ENCODE measurements at regions of chr2 and their contacts with region 1.

Region 1: DNA sequence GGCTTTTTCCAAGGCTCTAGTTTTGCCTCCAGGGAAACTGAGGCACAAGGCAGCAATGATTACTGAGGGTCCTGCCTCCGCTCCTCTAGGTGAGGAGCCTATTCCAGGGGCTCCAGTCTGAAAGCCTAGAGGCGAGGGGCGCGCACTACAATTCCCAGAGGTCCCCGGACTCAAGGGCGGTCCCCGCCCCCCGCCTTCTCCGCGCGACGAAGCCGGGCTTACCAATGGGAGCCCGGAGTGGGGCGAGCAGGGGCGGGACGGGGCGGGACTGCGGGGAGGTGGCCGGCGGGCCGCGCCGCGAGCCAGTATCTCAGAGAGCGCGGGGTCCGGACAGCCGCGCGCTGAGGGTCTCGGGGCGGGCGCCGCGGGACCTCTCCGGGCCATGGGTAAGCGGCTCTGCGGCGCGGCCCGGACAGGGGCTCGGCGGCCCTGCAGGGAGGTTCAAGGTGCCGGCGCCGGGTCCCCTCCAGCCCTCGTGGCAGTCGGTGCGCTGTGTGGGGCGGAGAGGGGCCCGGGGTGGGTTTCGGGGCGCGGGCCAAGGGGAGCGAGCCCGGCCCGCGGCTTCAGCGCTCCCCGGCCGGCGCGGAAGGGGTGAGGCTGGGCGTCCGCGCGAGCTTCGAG is at the start of gene ARID5A:
- DNase-seq: peak; percentile 88 to 95 (median 91)
- ATAC-seq: peak; percentile 48
- H3K4me3 ChIP-seq: peak within 1 kb of the TSS; percentile 90
- H3K4me3 Mint-ChIP-seq: peak within 1 kb of the TSS; percentile 99
- H3K27ac ChIP-seq: peak within 1 kb of the TSS; percentile 88 to 99
- H3K27ac Mint-ChIP-seq: peak within 1 kb of the TSS; percentile 99
- H3K4me1 ChIP-seq: peaks cover 76% of the 10 kb centered on the region
- H3K4me1 Mint-ChIP-seq: peaks cover 60% of the 10 kb centered on the region
- H3K27me3 ChIP-seq: no peaks in the 10 kb centered on the region
- H3K27me3 Mint-ChIP-seq: no peaks in the 10 kb centered on the region
- CTCF ChIP-seq: peak; percentile 53
- total RNA-seq, gene ARID5A: 326 to 342 TPM

Region 2: DNA sequence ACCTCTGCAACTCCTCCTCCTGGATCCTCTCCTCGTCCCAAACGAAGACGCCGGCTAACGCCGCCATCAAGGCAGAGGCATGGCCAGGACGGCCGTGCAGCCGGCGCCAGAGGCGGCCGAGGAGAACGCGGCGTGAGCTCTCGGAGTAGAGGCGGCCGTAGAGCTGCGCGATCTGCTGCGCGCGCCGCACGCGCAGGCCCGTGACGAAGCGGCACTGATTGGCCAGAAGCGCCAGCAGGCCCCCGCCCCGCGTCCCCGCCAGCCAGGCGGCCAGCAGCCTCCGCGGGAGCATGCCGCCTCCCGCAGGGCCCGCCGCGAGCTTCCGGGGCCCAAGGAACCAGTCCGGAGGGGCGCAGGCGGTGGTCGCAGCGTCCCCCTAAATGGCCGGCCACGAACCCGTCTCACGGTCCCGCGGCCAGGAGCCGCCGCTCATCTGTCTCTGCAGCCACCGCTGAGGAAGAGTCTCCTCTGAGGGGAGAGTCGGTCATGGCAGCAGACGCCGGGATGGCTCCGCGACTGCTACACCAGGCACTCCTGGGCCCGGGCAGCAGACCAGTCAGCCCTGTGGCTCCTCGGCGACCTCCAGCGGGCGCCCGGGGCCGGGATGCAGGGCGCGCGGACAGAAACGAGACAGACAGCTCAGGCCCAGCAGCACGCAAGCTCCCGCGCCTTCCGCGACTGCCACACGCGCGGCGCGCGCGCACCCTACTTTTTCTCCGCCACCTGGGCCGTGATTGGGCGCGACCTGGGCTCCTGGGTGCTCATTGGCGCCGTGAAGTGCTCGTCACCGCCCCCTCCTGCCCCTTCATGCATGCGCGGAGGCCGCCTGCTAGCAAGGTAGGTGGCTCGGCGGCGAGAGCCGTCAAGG is 328.2 kb before region 1 on chr2 and contains the start of gene STARD7:
- CTCF ChIA-PET with region 1: no interaction called
- POLR2A ChIA-PET with region 1: interaction called, 19 read pairs
- intact Hi-C with region 1: loop called in 1 of 2 experiments (anchors 5 kb)
- DNase-seq: peak; percentile 94 to 98 (median 96)
- ATAC-seq: peak; percentile 87
- H3K4me3 ChIP-seq: peak within 1 kb of the TSS; percentile 85
- H3K4me3 Mint-ChIP-seq: peak within 1 kb of the TSS; percentile 96
- H3K27ac ChIP-seq: peak within 1 kb of the TSS; percentile 57 to 87
- H3K27ac Mint-ChIP-seq: peak within 1 kb of the TSS; percentile 89
- H3K4me1 ChIP-seq: peaks cover 49% of the 10 kb centered on the region
- H3K4me1 Mint-ChIP-seq: peaks cover 57% of the 10 kb centered on the region
- H3K27me3 ChIP-seq: no peaks in the 10 kb centered on the region
- H3K27me3 Mint-ChIP-seq: no peaks in the 10 kb centered on the region
- CTCF ChIP-seq: peak; percentile 17
- total RNA-seq, gene STARD7: 57.4 to 58.6 TPM

Region 3: GRCh38 chr2:96320728-96321622 is 215.6 kb before region 1 on chr2:
- CTCF ChIA-PET with region 1: interaction called, 4 read pairs
- POLR2A ChIA-PET with region 1: interaction called, 12 read pairs
- intact Hi-C with region 1: no loop called
- DNase-seq: peak in 6 of 14 experiments; percentile 1 to 50 (median 24)
- ATAC-seq: no peak
- H3K4me3 ChIP-seq: peak overlapping the region; percentile 92
- H3K4me3 Mint-ChIP-seq: peak overlapping the region; percentile 84
- H3K27ac ChIP-seq: peak overlapping the region in 1 of 2 donors; percentile 63
- H3K27ac Mint-ChIP-seq: peak overlapping the region; percentile 16
- H3K4me1 ChIP-seq: peaks cover 64% of the 10 kb centered on the region
- H3K4me1 Mint-ChIP-seq: peaks cover 46% of the 10 kb centered on the region
- H3K27me3 ChIP-seq: no peaks in the 10 kb centered on the region
- H3K27me3 Mint-ChIP-seq: peaks cover 3% of the 10 kb centered on the region
- CTCF ChIP-seq: no peak

Region 4: DNA sequence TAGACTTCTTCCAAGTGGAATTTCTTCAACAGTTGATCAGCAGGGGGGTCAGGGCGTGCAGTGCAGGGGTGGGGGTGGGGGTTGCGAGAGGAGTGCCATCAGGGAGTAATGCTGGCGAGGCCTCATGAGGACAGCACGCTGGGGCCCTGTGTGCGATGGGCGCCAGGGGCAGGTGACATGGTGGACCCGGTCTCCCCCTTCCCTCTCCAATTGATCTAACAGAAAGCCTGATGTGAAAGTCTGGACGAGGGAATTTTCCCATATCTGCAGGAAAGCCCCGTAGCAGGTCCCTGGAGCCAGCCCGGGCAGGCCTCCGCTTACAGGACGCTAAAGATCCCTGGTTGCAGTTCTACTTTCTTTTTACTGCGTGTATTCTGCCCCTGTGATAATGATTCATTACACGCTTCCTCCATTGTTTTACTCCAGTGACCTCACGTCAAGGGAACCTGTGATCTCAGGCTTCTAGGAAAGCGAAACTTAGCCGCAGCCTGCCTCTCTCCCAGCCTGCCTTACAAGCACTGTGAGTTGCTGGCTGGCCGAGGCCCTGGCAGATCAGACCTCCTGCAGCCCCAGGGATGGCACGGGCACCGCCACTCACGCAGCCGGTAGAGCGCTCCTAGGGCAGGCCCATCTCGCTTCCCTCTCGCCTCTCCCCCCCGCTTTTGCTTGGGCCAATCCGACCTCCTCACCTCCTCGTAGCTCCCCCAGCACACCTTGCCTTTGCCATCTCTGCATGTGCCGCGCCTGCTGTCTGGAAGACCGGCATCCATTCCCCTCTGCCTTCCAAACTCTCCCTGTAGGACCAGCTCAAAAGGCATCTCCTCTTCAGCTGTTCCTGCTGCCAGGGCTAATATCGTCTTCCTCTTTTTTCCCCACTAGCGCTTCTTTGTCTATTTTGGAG is 50.6 kb before region 1 on chr2:
- CTCF ChIA-PET with region 1: no interaction called
- POLR2A ChIA-PET with region 1: interaction called, 7 read pairs
- intact Hi-C with region 1: loop called in 1 of 2 experiments (anchors 5 kb)
- DNase-seq: peak; percentile 57 to 91 (median 77)
- ATAC-seq: peak; percentile 95
- H3K4me3 ChIP-seq: peak overlapping the region; percentile 52
- H3K4me3 Mint-ChIP-seq: peak overlapping the region; percentile 88
- H3K27ac ChIP-seq: peak overlapping the region; percentile 58
- H3K27ac Mint-ChIP-seq: peak overlapping the region; percentile 91
- H3K4me1 ChIP-seq: peaks cover 14% of the 10 kb centered on the region
- H3K4me1 Mint-ChIP-seq: peaks cover 23% of the 10 kb centered on the region
- H3K27me3 ChIP-seq: no peaks in the 10 kb centered on the region
- H3K27me3 Mint-ChIP-seq: no peaks in the 10 kb centered on the region
- CTCF ChIP-seq: no peak

Region 5: GRCh38 chr2:96554293-96555145 is 18.0 kb after region 1 on chr2:
- CTCF ChIA-PET with region 1: interaction called, 54 read pairs
- POLR2A ChIA-PET with region 1: interaction called, 145 read pairs
- intact Hi-C with region 1: loop called (anchors 2 kb)
- DNase-seq: peak; percentile 57 to 88 (median 67)
- ATAC-seq: peak; percentile 56
- H3K4me3 ChIP-seq: peak overlapping the region; percentile 7
- H3K4me3 Mint-ChIP-seq: no peak overlapping the region
- H3K27ac ChIP-seq: no peak overlapping the region
- H3K27ac Mint-ChIP-seq: peak overlapping the region; percentile 79
- H3K4me1 ChIP-seq: peaks cover 20% of the 10 kb centered on the region
- H3K4me1 Mint-ChIP-seq: peaks cover 29% of the 10 kb centered on the region
- H3K27me3 ChIP-seq: no peaks in the 10 kb centered on the region
- H3K27me3 Mint-ChIP-seq: no peaks in the 10 kb centered on the region
- CTCF ChIP-seq: peak; percentile 98

Region 6: DNA sequence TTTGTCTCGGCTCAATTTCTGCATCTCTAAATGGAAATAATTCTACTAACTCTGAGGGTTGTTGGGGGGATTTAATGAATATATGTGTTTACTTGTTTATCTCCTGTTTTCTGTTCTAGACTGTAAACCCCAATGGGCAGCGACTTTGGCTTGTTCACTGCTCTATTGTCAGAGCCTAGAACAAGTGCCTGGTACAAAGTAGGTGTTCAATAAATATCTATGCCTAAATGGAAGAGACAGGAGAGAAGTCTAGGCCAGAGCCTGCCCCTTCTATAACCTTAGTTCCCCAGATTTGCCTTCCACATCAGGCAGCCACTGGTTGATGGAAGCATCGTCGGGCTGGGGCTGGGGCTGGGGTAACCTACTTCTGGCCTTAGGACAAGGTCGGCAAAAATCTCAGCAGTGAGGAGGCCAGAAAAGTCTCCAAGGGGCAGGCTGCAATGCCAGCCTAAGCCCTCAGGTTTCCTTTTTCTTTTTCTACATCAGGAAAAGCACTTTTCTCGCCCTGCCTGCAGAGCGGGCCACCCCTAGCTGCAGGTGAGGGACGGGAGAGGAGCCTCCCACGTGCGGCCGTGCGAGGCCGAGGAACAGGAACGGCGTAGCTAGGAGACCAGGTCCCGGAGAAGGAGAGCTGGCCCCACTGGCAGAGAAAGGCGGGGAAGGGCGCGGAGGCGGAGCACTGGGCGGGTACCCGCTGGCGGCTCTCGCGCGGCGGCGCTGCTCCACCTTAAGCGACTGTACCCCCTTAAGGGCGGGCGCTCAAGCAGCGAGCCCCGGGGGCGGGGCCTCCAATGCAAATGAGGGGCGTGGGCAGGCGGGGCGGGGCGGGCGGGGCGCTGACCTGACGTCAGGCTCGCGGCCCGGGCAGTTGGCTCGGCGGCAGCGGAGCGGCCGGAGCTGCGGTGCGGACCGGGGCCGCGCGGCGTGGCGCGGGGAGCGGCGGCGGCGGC is 223.8 kb after region 1 on chr2 and contains the start of gene CNNM4:
- CTCF ChIA-PET with region 1: interaction called, 4 read pairs
- POLR2A ChIA-PET with region 1: interaction called, 7 read pairs
- intact Hi-C with region 1: loop called in 1 of 2 experiments (anchors 2 kb)
- DNase-seq: peak; percentile 81 to 95 (median 90)
- ATAC-seq: peak; percentile 95
- H3K4me3 ChIP-seq: peak within 1 kb of the TSS; percentile 72
- H3K4me3 Mint-ChIP-seq: peak within 1 kb of the TSS; percentile 94
- H3K27ac ChIP-seq: peak within 1 kb of the TSS; percentile 62 to 73
- H3K27ac Mint-ChIP-seq: peak within 1 kb of the TSS; percentile 93
- H3K4me1 ChIP-seq: peaks cover 59% of the 10 kb centered on the region
- H3K4me1 Mint-ChIP-seq: peaks cover 52% of the 10 kb centered on the region
- H3K27me3 ChIP-seq: no peaks in the 10 kb centered on the region
- H3K27me3 Mint-ChIP-seq: no peaks in the 10 kb centered on the region
- CTCF ChIP-seq: no peak
- total RNA-seq, gene CNNM4: 7.0 to 7.1 TPM

Region 7: DNA sequence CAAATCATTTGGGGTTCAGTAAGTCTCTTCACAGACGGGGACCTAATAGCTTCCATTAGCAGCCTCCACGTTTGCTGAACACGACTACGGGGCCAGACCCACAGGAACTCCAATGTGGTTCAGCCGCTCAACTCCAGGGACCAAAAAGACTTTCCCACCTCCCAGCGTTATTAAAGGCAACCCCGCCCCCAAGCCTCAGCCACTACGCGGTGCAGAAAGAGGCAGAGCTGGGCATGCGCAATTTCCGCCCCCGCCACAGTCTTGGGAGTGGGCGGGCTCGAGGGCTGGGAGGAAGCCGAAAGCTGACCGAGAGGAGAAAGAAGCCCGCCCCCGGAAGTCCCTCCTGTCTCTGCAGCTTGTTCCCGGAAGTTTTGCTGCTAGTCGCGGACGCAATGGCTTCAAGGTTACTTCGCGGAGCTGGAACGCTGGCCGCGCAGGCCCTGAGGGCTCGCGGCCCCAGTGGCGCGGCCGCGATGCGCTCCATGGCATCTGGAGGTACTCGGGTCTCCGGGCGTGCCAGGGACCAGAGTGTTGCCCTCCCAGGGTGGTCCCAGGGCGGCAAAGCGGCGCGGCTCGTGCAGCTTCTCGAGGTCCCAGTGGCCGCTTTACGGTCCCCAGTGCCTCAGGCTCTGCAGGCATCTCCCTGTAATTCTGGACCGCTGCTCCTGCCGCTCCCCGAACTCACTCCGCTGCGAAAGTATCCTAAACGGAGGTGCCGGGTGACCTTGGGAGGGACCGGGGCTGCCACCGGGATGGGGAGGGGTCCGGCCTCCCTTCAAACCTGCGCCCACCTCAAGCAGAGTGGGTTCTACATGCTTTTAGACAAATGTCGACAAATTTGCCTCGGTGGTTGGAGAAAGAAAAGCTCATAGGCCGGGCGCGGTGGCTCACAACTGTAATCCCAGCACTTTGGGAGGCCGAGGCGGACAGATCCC is 1109.4 kb after region 1 on chr2 and contains the start of gene COX5B:
- CTCF ChIA-PET with region 1: no interaction called
- POLR2A ChIA-PET with region 1: no interaction called
- intact Hi-C with region 1: loop called in 1 of 2 experiments (anchors 10 kb)
- DNase-seq: peak; percentile 96 to 99 (median 98)
- ATAC-seq: peak; percentile 96
- H3K4me3 ChIP-seq: peak within 1 kb of the TSS; percentile 97
- H3K4me3 Mint-ChIP-seq: peak within 1 kb of the TSS; percentile 97
- H3K27ac ChIP-seq: peak within 1 kb of the TSS; percentile 84 to 89
- H3K27ac Mint-ChIP-seq: peak within 1 kb of the TSS; percentile 93
- H3K4me1 ChIP-seq: peaks cover 18% of the 10 kb centered on the region
- H3K4me1 Mint-ChIP-seq: peaks cover 31% of the 10 kb centered on the region
- H3K27me3 ChIP-seq: no peaks in the 10 kb centered on the region
- H3K27me3 Mint-ChIP-seq: no peaks in the 10 kb centered on the region
- CTCF ChIP-seq: no peak
- total RNA-seq, gene COX5B: 112 to 121 TPM

Region 8: GRCh38 chr2:97718051-97718882 is 1181.7 kb after region 1 on chr2:
- CTCF ChIA-PET with region 1: no interaction called
- POLR2A ChIA-PET with region 1: no interaction called
- intact Hi-C with region 1: no loop called
- DNase-seq: peak; percentile 57 to 89 (median 74)
- ATAC-seq: peak; percentile 88
- H3K4me3 ChIP-seq: peak overlapping the region; percentile 76
- H3K4me3 Mint-ChIP-seq: peak overlapping the region; percentile 89
- H3K27ac ChIP-seq: peak overlapping the region; percentile 75 to 88
- H3K27ac Mint-ChIP-seq: peak overlapping the region; percentile 98
- H3K4me1 ChIP-seq: peaks cover 95% of the 10 kb centered on the region
- H3K4me1 Mint-ChIP-seq: peaks cover 92% of the 10 kb centered on the region
- H3K27me3 ChIP-seq: no peaks in the 10 kb centered on the region
- H3K27me3 Mint-ChIP-seq: no peaks in the 10 kb centered on the region
- CTCF ChIP-seq: no peak

Measured in CD4-positive, alpha-beta T cell (primary cell).